ENCODE measurements at regions of chr2 and their contacts with region 1.

Region 1: GRCh38 chr2:201182650-201183364 is at the start of gene CASP10:
- DNase-seq: no peak
- ATAC-seq: peak in 7 of 8 donors; percentile 77 to 88 (median 79)
- H3K4me3 ChIP-seq: peak within 1 kb of the TSS; percentile 19 to 64 (median 62)
- H3K27ac ChIP-seq: peak within 1 kb of the TSS; percentile 23 to 89 (median 76)
- H3K4me1 ChIP-seq: peaks cover 0 to 43% (median 14%) of the 10 kb centered on the region in 9 donors
- H3K27me3 ChIP-seq: no peaks in the 10 kb centered on the region
- CTCF ChIP-seq: peak in 8 of 9 donors; percentile 18 to 71 (median 54)
- total RNA-seq, gene CASP10: 4.6 to 13.2 (median 5.6) TPM

Region 2: DNA sequence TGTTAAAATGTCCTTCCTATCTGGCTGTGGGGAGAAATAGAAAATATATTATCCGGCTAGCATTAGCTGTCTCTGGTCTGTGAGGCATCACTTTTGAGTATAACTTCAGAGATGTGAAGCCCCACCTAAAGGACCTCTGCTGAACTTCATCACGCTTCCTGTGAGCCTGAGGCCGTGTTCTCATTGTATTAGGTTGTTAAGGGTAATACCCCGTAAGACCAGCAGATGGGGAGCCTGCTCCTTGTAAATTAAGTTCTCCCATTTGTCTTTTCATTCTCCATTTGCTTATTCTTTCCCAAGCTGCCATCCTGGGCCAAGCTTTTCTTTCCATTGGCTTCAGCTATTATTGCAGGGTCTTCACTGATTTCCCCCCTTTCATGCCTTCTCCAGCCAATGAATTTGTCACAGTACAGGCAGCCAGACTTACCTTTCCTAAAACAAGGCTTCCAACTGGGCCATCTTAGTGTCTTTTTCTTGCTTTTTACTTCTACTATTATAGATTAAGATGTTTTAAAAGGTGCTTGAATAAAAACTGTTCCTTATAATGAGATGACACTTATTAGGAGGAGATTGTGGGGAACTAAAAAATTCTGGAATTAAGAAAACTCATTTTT is 281.2 kb before region 1 on chr2:
- intact Hi-C with region 1: loop called in 5 of 10 experiments (anchors 2 to 10 kb)
- DNase-seq: peak in 1 of 2 donors; percentile 66
- ATAC-seq: peak; percentile 77 to 88 (median 82)
- H3K4me3 ChIP-seq: no peak overlapping the region
- H3K27ac ChIP-seq: peak overlapping the region in 3 of 10 donors; percentile 6 to 51 (median 19)
- H3K4me1 ChIP-seq: peaks cover 0 to 18% (median 5%) of the 10 kb centered on the region in 9 donors
- H3K27me3 ChIP-seq: no peaks in the 10 kb centered on the region
- CTCF ChIP-seq: peak; percentile 51 to 86 (median 76)

Region 3: DNA sequence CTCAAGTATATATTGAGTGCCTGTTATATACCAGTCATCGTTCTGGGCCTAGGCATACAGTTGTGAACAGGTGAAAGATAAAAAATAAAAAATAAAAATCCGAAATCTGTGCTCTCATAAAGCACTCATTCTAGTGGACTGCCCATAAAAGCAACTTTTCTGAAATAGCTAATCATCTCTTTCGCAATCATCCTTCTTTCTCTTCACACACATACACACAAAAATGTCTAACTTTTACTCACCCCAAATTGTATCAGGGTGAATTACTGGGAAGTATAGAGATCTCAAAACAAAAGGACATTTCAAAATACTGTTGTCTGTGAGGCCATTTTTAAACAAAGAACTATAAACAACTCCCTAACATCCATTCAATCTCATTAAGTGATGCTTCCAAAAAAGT is 189.7 kb before region 1 on chr2:
- intact Hi-C with region 1: no loop called
- DNase-seq: no peak
- ATAC-seq: no peak
- H3K4me3 ChIP-seq: no peak overlapping the region
- H3K27ac ChIP-seq: no peak overlapping the region
- H3K4me1 ChIP-seq: peaks cover 0 to 6% (median 0%) of the 10 kb centered on the region in 9 donors
- H3K27me3 ChIP-seq: no peaks in the 10 kb centered on the region
- CTCF ChIP-seq: no peak

Region 4: GRCh38 chr2:201220102-201220570 is 37.3 kb after region 1 on chr2:
- intact Hi-C with region 1: loop called in 1 of 10 experiments (anchors 5 kb)
- DNase-seq: peak in 1 of 2 donors; percentile 65
- ATAC-seq: peak; percentile 51 to 88 (median 76)
- H3K4me3 ChIP-seq: no peak overlapping the region
- H3K27ac ChIP-seq: peak overlapping the region in 9 of 10 donors; percentile 31 to 78 (median 42)
- H3K4me1 ChIP-seq: peaks cover 2 to 46% (median 35%) of the 10 kb centered on the region in 9 donors
- H3K27me3 ChIP-seq: no peaks in the 10 kb centered on the region
- CTCF ChIP-seq: no peak

Measured in heart right ventricle (tissue), 16 donors.